Cardiac septum (tissue), 1 donor: ENCODE measurements at regions of chr14 and their contacts with region 1.

Region 1: GRCh38 chr14:73568381-73568781 is 632 bp upstream of the ACOT2 start:
- DNase-seq: no peak

Region 2: GRCh38 chr14:73452341-73453186 is 115.8 kb before region 1 on chr14:
- intact Hi-C with region 1: no loop called
- DNase-seq: no peak

Region 3: GRCh38 chr14:73503648-73504047 is 64.7 kb before region 1 on chr14:
- intact Hi-C with region 1: loop called (anchors 10 kb)
- DNase-seq: no peak

Region 4: DNA sequence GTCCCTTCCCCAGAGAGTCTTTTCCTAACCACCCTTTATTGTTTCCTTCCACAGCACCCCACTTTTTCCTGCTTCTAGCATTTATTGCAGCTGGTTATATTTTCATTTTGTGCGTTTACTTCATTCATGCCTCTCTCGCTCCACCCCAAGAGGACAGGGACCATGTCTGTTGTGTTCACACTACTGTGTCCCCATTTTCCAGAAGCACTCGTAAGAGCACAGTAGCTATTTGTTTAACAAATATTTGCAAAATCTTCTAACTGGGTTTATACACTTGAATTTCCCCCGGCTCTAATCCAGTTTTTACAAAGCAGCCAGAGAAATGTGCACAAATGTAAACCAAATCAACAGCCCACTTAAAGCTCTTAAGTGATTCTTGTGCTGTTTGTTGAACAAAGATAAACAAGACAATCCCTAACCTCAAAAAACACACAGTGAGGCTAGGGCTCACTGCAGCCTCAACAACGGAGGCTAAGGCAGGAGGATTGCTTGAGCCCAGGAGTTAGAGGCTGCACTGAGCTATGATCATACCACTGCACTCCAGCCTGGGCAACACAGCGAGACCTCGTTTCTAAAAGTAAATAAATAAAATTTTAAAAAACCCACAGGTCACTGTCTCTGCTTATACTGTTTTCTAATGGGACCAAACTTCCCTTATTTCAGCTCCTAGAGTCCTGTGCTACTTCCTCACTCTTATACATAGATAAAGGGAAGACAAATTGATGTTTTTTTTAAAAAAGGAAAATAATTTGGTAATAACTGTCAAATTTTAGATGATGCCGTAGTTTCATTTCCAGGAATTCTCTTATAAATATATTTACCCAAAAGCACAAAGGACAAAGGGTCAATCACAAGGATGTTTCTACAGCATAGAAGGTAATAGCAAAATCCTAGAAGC is 741.0 kb after region 1 on chr14:
- intact Hi-C with region 1: no loop called
- DNase-seq: no peak